ENCODE measurements at regions of chr1 and their contacts with region 1.

Region 1: DNA sequence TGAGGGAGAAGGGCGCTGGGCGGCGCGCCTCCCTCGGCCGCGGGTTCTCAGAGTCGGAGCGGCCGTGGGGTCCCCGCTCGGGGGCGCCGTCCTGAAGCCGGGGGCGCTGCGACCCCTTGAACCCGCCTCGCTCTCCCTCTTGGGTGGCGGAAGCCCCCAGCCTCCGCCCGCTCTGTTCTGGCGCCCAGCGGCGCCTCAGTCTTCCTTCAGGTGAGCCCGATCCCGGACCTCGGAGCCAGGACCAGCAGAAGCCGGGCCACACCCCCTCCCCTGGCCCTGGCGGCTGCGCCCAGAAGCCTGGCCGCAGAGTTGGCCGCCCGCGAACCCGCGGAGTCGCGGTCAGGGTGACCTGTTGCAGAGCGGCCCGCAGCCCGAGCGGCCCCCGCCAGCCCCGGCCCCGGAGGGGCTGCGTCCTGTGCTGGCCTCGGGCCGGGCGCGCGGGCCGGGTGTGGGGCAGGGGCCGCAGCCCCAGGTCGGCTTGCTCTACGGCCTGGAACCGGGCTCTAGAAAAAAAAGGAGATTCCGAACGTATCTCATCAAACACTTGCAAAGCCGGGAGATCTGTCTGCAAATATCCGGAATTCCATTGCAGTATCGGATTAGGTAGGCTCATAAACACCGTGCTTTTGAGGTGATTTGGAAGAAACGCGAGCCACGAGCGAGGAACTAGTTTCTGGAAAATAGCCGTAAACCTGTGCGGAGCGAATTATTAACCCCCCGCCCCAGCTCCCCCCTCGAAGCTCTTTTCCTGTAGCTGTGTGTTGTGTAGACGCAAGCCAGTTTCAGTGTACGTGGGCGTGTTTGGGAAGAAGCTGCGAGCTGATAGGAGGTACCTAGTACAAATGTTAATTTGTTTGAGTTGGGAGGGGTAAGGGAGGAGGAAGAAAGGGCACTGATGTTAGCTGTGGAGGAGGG is 816 bp downstream of the RALGPS2 start:
- DNase-seq: peak; percentile 83
- ATAC-seq: peak; percentile 76
- H3K4me3 ChIP-seq: peak overlapping the region; percentile 55 to 63
- H3K27ac ChIP-seq: peak overlapping the region; percentile 82
- H3K4me1 ChIP-seq: peaks cover 12 to 25% of the 10 kb centered on the region in 2 experiments; a peak in 3 of 4 replicates
- H3K27me3 ChIP-seq: no peaks in the 10 kb centered on the region
- CTCF ChIP-seq: 0 out of 6 replicates have a peak, but pooled peaks of 1 of the 3 experiments have one; percentile 10
- POLR2A ChIP-seq: no peak
- RAD21 ChIP-seq: no peak

Region 2: GRCh38 chr1:178542560-178543356 is 183.1 kb before region 1 on chr1:
- CTCF ChIA-PET with region 1: no interaction called
- POLR2A ChIA-PET with region 1: no interaction called
- RAD21 ChIA-PET with region 1: no interaction called
- intact Hi-C with region 1: loop called (anchors 2 kb)
- DNase-seq: peak; percentile 43
- ATAC-seq: peak; percentile 88
- H3K4me3 ChIP-seq: peak overlapping the region; percentile 61 to 69
- H3K27ac ChIP-seq: peak overlapping the region; percentile 64
- H3K4me1 ChIP-seq: peaks cover 17 to 33% of the 10 kb centered on the region in 2 experiments
- H3K27me3 ChIP-seq: no peaks in the 10 kb centered on the region
- CTCF ChIP-seq: peak; percentile 84 to 98 (median 88)
- POLR2A ChIP-seq: no peak
- RAD21 ChIP-seq: peak; percentile 85

Region 3: GRCh38 chr1:178784131-178784536 is 58.3 kb after region 1 on chr1:
- CTCF ChIA-PET with region 1: no interaction called
- POLR2A ChIA-PET with region 1: no interaction called
- RAD21 ChIA-PET with region 1: no interaction called
- intact Hi-C with region 1: no loop called
- DNase-seq: no peak
- ATAC-seq: no peak
- H3K4me3 ChIP-seq: no peak overlapping the region
- H3K27ac ChIP-seq: no peak overlapping the region
- H3K4me1 ChIP-seq: no peaks in the 10 kb centered on the region
- H3K27me3 ChIP-seq: no peaks in the 10 kb centered on the region
- CTCF ChIP-seq: no peak
- POLR2A ChIP-seq: no peak
- RAD21 ChIP-seq: no peak

Measured in HCT116 (cell line).